Mucosa of descending colon (tissue), 3 donors: ENCODE measurements at regions of chr7 and their contacts with region 1.

Region 1: DNA sequence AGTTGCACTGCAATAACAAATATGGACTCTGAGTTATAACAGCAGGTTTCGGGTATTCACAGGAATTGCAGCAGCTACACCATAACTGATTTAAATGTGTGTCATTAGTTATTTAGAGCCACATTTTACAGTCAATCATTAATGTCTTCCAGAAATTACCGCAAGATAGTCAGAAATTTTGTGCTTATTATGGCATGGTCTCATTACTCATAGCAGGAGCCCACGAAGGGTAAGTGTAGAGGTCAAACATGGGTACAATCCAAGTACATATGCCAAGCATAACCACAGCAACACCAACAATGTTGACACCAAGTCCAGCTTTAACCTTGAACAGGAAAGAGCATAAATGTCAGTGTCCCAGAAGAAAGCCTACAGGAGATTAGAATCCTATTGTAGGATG is 84.4 kb downstream of the SLC13A1 start:
- DNase-seq: no peak
- ATAC-seq: no peak
- H3K4me3 ChIP-seq: no peak overlapping the region
- H3K4me1 ChIP-seq: no peaks in the 10 kb centered on the region
- CTCF ChIP-seq: no peak

Region 2: DNA sequence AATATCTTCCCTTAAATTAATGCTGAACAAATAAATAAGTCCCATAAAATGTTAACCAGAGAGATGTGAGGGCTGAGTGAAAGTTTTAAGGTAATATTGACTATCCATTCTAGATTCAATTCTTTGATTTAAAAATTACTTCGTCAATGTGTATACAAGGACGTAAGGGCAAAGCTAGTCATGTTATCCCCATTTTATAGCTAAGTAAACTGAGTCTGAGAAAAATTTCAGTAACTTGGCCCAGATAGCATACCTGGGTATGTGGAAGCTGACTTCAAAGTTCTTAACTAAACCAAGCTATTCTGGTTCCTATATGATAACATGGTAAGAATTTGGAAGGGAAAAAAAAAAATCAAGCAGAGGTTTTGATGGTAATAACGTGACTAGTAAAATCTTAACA is 301.5 kb before region 1 on chr7:
- intact Hi-C with region 1: loop called in 1 of 2 experiments (anchors 5 kb)
- DNase-seq: no peak
- ATAC-seq: no peak
- H3K4me3 ChIP-seq: no peak overlapping the region
- H3K4me1 ChIP-seq: no peaks in the 10 kb centered on the region
- CTCF ChIP-seq: no peak

Region 3: GRCh38 chr7:122984021-122984420 is 131.3 kb before region 1 on chr7:
- intact Hi-C with region 1: no loop called
- DNase-seq: no peak
- ATAC-seq: no peak
- H3K4me3 ChIP-seq: no peak overlapping the region
- H3K4me1 ChIP-seq: no peaks in the 10 kb centered on the region
- CTCF ChIP-seq: no peak